Activated CD8-positive, alpha-beta T cell treated with anti-CD3 and anti-CD28 coated beads, Interleukin-2, amount 10 ng/mL, durations not matched to agents 7 days and 5 days (primary cell): ENCODE measurements at regions of chr16 and their contacts with region 1.

Region 1: DNA sequence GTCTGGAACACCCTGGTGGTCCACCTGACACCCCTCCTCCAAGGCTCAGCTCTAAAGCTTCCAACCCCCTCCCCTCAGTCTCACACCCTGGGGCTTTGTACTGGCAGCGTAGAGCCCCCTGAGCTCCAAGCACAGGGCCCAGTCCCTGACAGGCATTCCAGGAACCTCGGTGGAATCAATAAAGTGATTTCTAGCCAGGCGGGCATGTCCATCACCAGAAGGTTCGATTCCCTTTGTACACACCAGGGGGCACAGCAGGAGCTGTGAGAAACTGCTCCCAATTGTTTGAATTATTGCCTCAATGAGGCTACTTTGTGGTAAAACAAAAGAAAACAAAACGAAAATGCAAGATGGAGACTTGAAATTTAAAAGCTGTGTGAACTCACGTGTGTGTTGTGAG is 51.8 kb downstream of the SMPD3 start:
- DNase-seq: peak; percentile 66
- ATAC-seq: peak; percentile 59
- H3K4me3 Mint-ChIP-seq: no peak overlapping the region
- H3K27ac Mint-ChIP-seq: no peak overlapping the region
- H3K4me1 Mint-ChIP-seq: peaks cover 21% of the 10 kb centered on the region
- H3K27me3 Mint-ChIP-seq: peaks cover 18% of the 10 kb centered on the region

Region 2: GRCh38 chr16:68319185-68319908 is 77.1 kb before region 1 on chr16:
- CTCF ChIA-PET with region 1: no interaction called
- POLR2A ChIA-PET with region 1: no interaction called
- DNase-seq: peak; percentile 38
- ATAC-seq: peak; percentile 57
- H3K4me3 Mint-ChIP-seq: no peak overlapping the region
- H3K27ac Mint-ChIP-seq: peak overlapping the region; percentile 66
- H3K4me1 Mint-ChIP-seq: peaks cover 19% of the 10 kb centered on the region
- H3K27me3 Mint-ChIP-seq: no peaks in the 10 kb centered on the region

Region 3: DNA sequence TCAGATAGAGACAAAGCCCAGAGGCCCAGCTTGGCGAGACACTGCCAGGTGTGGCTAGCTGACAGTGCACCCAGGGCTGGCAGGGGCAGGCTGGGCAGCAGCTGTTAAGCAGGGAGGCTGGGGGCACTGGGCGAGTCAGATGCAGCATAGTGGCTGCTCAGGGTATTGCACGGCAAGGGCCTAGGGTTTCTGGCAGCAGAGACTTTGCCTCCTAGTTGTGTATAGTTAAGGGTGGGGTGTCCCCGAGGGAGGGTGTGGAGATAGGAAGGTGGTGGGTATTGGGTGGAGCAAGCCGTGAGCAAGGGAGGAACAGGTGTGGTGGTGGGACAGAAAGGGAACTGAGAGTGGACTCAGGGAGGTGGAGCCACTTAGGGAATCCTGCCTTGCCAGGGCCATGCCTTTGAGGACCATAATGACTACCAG is 14.2 kb before region 1 on chr16:
- CTCF ChIA-PET with region 1: interaction called, 14 read pairs
- POLR2A ChIA-PET with region 1: interaction called, 3 read pairs
- DNase-seq: peak; percentile 41
- ATAC-seq: peak; percentile 60
- H3K4me3 Mint-ChIP-seq: no peak overlapping the region
- H3K27ac Mint-ChIP-seq: no peak overlapping the region
- H3K4me1 Mint-ChIP-seq: peaks cover 18% of the 10 kb centered on the region
- H3K27me3 Mint-ChIP-seq: peaks cover 39% of the 10 kb centered on the region

Region 4: DNA sequence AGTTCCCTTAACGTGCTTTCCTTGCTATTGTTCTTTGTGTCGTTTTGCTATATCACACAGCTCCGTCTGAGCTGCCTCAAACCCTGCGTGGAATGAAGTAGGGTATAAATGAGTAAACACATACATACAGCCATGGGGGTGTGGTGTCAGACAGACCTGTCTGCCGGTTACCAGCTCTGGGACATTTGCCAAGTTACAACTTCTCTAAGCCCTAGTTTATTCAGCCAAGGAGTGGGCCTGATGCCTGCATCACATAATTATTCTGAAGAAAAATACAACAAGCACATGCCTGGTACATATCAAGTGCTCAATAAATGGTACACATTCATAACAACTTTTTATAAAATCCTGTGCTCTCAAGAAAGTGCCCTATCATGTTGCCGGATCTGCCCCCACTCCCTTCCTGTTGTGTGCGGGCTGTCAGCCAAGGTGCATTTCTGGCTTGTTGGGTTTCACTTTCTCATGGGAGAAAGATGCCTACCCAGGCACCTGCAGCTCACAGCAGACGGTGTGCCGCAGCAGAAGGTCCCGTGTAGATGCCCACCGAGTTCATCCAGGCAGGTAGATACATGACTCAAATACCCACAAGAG is 21.3 kb after region 1 on chr16:
- CTCF ChIA-PET with region 1: interaction called, 13 read pairs
- POLR2A ChIA-PET with region 1: interaction called, 3 read pairs
- DNase-seq: peak; percentile 87
- ATAC-seq: peak; percentile 97
- H3K4me3 Mint-ChIP-seq: peak overlapping the region; percentile 76
- H3K27ac Mint-ChIP-seq: peak overlapping the region; percentile 90
- H3K4me1 Mint-ChIP-seq: peaks cover 36% of the 10 kb centered on the region
- H3K27me3 Mint-ChIP-seq: no peaks in the 10 kb centered on the region

Region 5: DNA sequence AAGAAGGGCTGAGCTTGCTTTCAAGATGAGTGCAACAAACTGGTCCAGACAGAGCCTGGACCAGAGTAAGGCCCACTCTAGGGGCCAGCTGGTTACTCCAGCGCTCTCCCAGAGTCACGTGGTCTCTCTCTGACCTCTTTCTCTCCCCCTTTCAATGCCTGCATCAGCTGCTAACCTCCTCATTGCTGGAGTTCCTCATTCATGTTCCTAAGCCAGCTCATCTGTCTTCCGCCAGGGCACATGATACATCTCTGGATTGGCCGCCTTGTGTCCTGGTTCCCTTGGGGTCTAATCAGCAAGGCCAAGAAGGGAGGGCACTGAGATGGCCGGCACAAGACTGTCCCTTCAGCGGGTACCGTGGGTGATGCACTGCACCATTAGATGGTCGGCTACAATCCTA is 115.7 kb after region 1 on chr16:
- CTCF ChIA-PET with region 1: interaction called, 18 read pairs
- POLR2A ChIA-PET with region 1: interaction called, 3 read pairs
- DNase-seq: no peak
- ATAC-seq: no peak
- H3K4me3 Mint-ChIP-seq: no peak overlapping the region
- H3K27ac Mint-ChIP-seq: no peak overlapping the region
- H3K4me1 Mint-ChIP-seq: peaks cover 12% of the 10 kb centered on the region
- H3K27me3 Mint-ChIP-seq: peaks cover 11% of the 10 kb centered on the region